MCF 10A (cell line): ENCODE measurements at regions of chr16 and their contacts with region 1.

Region 1: DNA sequence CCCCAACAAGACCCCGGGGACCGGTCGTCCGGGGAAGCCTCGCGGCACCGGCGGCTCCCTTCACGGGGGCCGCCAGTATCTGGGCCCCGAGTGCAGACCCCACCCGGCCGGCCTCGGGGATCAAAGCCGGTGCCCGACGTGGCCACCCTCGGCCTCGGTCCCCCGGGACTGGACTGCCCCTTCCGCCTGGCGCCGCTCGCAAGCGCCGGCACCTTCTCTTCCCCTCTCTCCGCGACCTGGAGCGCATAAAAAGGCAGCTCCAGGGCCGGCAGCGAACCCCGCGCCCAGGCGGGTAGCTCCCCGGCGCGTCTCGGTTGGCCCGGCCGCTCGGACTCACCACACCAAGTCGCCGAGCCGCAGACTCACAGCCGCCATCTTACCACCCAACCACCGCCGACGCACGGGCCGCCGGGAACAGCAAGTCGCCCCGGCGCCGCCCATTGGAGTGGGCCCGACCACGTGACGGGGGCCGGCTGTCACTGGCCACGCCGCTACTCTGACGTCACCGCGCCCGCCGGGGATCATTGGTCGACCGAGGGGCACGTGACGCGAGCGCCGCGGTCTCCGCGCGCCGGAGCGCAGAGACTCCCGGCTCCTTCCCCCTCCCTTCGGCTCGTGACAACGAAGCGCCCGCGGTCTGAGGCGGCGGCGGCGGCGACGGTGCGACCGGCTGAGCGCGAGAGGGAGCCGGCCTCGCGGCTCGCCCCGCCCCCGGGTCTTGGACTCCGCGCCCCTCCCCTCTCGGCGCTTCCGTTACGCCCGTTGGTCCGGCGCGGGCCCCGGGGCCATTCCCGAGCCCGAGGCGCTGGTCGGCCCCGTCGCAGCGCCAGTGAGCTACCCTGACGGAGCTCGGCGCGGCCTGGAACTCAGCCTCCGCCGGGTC is at the starts of genes GLYR1 and UBN1:
- DNase-seq: peak; percentile 97
- H3K4me3 Mint-ChIP-seq: peak within 1 kb of the TSS; percentile 96
- H3K27ac Mint-ChIP-seq: peak within 1 kb of the TSS; percentile 95
- H3K4me1 Mint-ChIP-seq: peaks cover 33% of the 10 kb centered on the region
- H3K27me3 Mint-ChIP-seq: no peaks in the 10 kb centered on the region
- CTCF ChIP-seq: no peak
- total RNA-seq, gene GLYR1: 67.3 and 77.3 TPM in 2 replicates
- total RNA-seq, gene UBN1: 33.3 and 38.1 TPM in 2 replicates

Region 2: DNA sequence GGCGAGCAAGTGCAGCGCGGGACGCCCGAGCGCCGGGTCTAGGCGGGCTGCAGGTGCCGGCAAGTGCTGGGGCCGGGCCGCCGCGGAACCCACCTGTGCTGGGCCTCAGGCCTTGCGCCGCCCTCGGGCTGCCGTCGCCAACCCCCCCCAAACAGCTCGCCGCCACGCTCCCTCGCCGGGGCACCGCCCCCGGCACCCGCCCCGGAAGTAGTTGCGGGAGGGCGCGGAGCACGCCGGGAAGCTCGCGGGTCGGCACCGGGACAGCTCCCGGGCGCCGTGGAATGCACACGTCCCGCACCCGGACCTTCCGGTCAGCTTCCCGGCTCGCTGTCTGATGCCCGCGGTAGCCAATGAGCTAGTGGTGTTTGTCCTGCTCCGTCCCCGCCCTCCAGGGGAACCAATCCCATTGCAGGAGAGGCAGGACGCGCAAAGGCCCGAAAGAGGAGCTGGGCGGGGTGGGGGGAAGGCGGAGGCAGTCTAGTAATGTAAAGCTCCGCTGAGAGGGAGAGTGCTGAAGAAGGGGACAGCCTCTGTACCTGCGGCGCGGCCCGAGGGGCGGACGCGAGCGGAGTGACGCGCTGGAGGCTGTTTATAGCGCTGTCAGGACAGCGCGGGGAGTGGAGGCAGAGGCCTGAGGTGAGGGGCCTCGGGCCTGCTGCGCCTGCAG is 112.9 kb before region 1 on chr16 and contains the starts of genes ANKS3 and DNAAF8:
- CTCF ChIA-PET with region 1: interaction called, 3 read pairs
- POLR2A ChIA-PET with region 1: interaction called, 18 read pairs
- intact Hi-C with region 1: no loop called
- DNase-seq: peak; percentile 98
- H3K4me3 Mint-ChIP-seq: peak within 1 kb of the TSS; percentile 98
- H3K27ac Mint-ChIP-seq: peak within 1 kb of the TSS; percentile 98
- H3K4me1 Mint-ChIP-seq: peaks cover 13% of the 10 kb centered on the region
- H3K27me3 Mint-ChIP-seq: no peaks in the 10 kb centered on the region
- CTCF ChIP-seq: no peak
- total RNA-seq, gene ANKS3: 29.9 and 35.0 TPM in 2 replicates
- total RNA-seq, gene DNAAF8: 0.56 and 1.6 TPM in 2 replicates

Region 3: DNA sequence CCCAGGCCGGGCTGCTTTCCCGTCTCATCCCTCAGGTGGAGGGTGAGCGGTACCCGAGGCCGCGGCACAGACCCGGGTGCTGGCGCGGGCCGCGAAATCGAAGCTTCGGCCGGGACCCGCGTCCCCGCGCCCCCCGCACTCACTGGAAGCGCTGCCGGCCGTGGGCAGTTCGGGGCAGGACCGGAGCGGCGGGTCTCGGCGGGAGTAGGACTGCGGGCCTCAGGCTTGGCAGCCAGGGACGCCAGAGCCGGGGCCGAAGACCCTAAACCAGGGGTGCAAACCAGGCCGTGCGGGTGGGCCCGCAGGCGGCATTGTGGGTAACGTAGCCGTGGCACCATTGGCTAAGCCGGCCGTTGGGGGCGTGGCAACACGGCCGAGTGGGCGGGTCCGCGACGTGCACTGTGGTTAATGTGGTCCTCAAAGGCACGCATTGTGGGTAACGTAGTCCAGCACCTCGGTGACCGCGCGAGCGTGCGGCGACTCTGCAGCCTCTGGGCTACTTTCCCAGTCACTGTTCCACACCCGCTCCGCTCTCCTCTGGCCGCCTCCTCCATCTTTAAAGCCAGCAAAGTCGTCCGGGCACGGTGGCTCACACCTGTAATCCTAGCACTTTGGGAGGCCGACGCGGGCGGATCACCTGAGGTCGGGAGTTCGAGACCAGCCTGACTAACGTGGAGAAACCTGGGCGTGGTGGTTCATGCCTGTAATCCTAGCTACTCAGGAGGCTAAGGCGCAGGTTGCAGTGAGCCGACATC is 80.1 kb before region 1 on chr16 and contains the start of gene ZNF500:
- CTCF ChIA-PET with region 1: no interaction called
- POLR2A ChIA-PET with region 1: interaction called, 10 read pairs
- intact Hi-C with region 1: loop called (anchors 2 kb)
- DNase-seq: peak; percentile 95
- H3K4me3 Mint-ChIP-seq: peak within 1 kb of the TSS; percentile 90
- H3K27ac Mint-ChIP-seq: peak within 1 kb of the TSS; percentile 95
- H3K4me1 Mint-ChIP-seq: peaks cover 5% of the 10 kb centered on the region
- H3K27me3 Mint-ChIP-seq: no peaks in the 10 kb centered on the region
- CTCF ChIP-seq: no peak
- total RNA-seq, gene ZNF500: 13.8 and 14.0 TPM in 2 replicates

Region 4: DNA sequence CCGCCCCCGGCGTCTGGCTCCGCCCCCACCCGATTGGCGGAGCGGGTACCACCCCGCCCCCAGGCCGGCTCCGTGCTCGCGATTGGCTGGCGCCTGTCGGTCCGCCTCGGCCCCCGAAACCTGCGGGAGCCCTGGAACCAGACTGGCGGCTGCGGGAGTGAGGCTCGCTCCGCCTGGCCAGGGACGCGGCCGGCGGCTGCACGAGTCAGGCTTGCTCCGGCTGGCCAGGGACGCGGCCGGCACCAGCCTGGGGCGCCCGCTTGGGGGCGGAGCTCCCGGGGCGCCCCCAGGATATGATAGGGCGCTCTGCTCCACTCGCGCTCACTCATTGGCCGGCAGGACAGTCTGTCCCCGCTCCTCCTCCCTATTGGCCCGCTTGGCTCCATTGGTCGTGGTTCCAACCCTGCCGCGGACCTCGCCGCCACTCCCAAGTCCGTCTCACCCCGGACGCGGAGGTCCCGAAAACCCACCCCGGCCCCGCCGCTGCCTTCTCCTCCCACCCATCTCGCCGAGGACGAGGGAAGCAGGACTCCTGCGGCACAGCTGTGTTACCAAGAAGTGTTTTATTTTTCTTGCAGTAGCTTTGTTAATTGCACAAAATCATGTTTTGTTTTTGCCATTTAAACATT is 44.4 kb before region 1 on chr16:
- CTCF ChIA-PET with region 1: no interaction called
- POLR2A ChIA-PET with region 1: interaction called, 20 read pairs
- intact Hi-C with region 1: no loop called
- DNase-seq: peak; percentile 92
- H3K4me3 Mint-ChIP-seq: peak overlapping the region; percentile 76
- H3K27ac Mint-ChIP-seq: peak overlapping the region; percentile 27
- H3K4me1 Mint-ChIP-seq: peaks cover 6% of the 10 kb centered on the region
- H3K27me3 Mint-ChIP-seq: no peaks in the 10 kb centered on the region
- CTCF ChIP-seq: no peak

Region 5: GRCh38 chr16:4882633-4883285 is 35.6 kb after region 1 on chr16:
- CTCF ChIA-PET with region 1: no interaction called
- POLR2A ChIA-PET with region 1: interaction called, 5 read pairs
- intact Hi-C with region 1: loop called (anchors 2 kb)
- DNase-seq: peak; percentile 94
- H3K4me3 Mint-ChIP-seq: no peak overlapping the region
- H3K27ac Mint-ChIP-seq: no peak overlapping the region
- H3K4me1 Mint-ChIP-seq: peaks cover 31% of the 10 kb centered on the region
- H3K27me3 Mint-ChIP-seq: no peaks in the 10 kb centered on the region
- CTCF ChIP-seq: no peak

Region 6: GRCh38 chr16:4936991-4937781 is 90.1 kb after region 1 on chr16 and contains the start of gene PPL:
- CTCF ChIA-PET with region 1: no interaction called
- POLR2A ChIA-PET with region 1: interaction called, 15 read pairs
- intact Hi-C with region 1: no loop called
- DNase-seq: peak; percentile 86
- H3K4me3 Mint-ChIP-seq: peak within 1 kb of the TSS; percentile 86
- H3K27ac Mint-ChIP-seq: no peak within 1 kb of the TSS
- H3K4me1 Mint-ChIP-seq: peaks cover 28% of the 10 kb centered on the region
- H3K27me3 Mint-ChIP-seq: no peaks in the 10 kb centered on the region
- CTCF ChIP-seq: no peak
- total RNA-seq, gene PPL: 49.1 and 50.1 TPM in 2 replicates

Region 7: DNA sequence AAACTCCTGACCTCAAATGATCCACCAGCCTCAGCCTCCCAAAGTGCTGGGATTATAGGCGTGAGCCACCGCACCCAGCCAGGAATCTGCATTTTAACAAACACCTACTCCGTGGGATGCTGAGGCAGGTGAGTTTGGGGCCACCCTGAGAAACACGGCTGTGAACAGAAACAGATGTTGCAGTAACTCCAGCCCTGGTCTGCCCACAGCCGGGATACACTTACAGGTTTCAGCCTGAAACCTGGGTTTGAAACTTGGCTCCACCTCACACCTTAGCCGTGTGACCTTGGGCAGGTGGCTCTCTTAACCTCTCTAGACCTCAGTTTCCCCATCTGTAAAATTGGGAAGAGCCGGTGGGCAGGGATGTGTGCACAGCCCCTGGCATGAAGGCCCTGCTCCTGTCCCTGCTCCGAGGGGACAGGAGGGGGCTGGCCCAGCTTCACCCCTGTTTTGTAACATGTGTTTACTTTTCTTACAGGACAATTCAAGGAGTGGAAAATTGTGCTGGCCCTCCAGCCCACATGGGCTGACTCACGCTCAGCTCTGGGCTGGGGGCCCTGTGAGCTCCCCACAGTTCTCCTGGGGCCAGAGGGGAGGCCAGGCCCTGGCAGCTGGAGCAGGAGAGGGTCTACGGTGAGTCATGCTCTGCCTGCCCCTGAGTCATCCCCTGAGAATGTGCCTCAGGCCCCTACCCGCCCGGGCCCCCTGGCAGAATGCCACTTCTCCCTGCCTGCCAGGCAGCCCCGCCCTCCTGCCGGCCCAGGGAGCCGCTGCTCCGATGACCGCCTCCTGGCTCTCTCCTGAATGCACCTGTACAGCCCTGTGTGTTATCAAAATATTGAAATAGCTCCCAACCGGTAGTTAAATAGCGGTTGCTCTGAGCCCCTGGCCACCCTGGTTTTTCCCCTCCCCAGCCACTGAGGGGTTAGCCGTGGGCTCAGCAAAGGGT is 97.5 kb after region 1 on chr16:
- CTCF ChIA-PET with region 1: interaction called, 3 read pairs
- POLR2A ChIA-PET with region 1: interaction called, 15 read pairs
- intact Hi-C with region 1: loop called (anchors 1 kb)
- DNase-seq: peak; percentile 98
- H3K4me3 Mint-ChIP-seq: peak overlapping the region; percentile 54
- H3K27ac Mint-ChIP-seq: peak overlapping the region; percentile 91
- H3K4me1 Mint-ChIP-seq: peaks cover 45% of the 10 kb centered on the region
- H3K27me3 Mint-ChIP-seq: no peaks in the 10 kb centered on the region
- CTCF ChIP-seq: no peak